Activated CD4-positive, alpha-beta T cell treated with anti-CD3 and anti-CD28 coated beads, Interleukin-2, amount 10 ng/mL, durations not matched to agents 7 days and 5 days (primary cell): ENCODE measurements at regions of chr3 and their contacts with region 1.

Region 1: GRCh38 chr3:16884084-16884747 is 539 bp upstream of the PLCL2 start:
- DNase-seq: peak; percentile 61
- H3K4me3 Mint-ChIP-seq: peak overlapping the region; percentile 92
- H3K27ac Mint-ChIP-seq: peak overlapping the region; percentile 98
- H3K4me1 Mint-ChIP-seq: peaks cover 35% of the 10 kb centered on the region
- H3K27me3 Mint-ChIP-seq: peaks cover 10% of the 10 kb centered on the region

Region 2: GRCh38 chr3:16842272-16843270 is 41.6 kb before region 1 on chr3:
- CTCF ChIA-PET with region 1: interaction called, 10 read pairs
- POLR2A ChIA-PET with region 1: no interaction called
- DNase-seq: peak; percentile 87
- H3K4me3 Mint-ChIP-seq: peak overlapping the region; percentile 71
- H3K27ac Mint-ChIP-seq: peak overlapping the region; percentile 98
- H3K4me1 Mint-ChIP-seq: peaks cover 83% of the 10 kb centered on the region
- H3K27me3 Mint-ChIP-seq: no peaks in the 10 kb centered on the region

Region 3: DNA sequence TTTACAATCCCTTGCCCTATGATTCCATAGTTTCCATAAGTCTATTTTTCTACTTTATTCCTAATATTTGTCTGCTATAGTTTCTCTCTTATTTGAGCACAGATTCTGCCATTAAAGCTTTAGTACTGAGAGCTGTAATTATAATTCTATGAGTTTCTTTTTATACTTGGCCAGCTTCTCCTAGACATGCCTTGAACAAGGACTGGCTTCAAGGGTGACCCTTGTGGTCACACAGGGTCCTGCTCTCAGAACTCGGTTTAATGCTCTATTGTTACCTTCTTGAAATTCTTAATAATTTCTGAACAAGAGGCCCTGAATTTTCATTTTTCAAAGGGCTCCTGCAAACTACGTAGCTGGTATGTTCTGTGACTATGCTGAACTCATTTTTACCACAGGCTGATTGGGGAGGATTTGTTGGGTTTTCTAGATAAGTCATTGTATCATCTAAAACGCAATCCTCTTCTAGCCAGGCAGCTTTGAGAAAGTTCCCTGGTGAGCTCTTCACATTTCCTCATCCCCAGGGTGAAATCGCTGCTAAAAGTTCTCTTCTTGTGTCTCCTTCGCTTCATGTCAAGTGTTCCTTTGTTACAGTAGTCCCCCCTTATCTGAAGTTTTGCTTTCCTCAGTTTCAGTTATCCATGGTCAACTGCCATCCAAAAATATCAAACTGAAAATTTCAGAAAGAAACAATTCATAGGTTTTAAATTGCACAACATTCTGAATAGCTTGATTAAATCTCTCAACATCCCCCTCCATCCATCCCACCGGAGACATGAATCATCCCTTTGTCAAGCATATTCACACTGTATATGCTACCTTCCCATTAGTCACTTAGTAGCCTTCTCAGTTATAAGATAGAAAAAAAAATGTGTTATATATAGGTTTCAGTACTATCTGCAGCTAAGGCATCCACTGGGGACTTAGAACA is 12.0 kb before region 1 on chr3:
- CTCF ChIA-PET with region 1: interaction called, 19 read pairs
- POLR2A ChIA-PET with region 1: no interaction called
- DNase-seq: no peak
- H3K4me3 Mint-ChIP-seq: no peak overlapping the region
- H3K27ac Mint-ChIP-seq: no peak overlapping the region
- H3K4me1 Mint-ChIP-seq: peaks cover under 1% of the 10 kb centered on the region
- H3K27me3 Mint-ChIP-seq: peaks cover 18% of the 10 kb centered on the region

Region 4: DNA sequence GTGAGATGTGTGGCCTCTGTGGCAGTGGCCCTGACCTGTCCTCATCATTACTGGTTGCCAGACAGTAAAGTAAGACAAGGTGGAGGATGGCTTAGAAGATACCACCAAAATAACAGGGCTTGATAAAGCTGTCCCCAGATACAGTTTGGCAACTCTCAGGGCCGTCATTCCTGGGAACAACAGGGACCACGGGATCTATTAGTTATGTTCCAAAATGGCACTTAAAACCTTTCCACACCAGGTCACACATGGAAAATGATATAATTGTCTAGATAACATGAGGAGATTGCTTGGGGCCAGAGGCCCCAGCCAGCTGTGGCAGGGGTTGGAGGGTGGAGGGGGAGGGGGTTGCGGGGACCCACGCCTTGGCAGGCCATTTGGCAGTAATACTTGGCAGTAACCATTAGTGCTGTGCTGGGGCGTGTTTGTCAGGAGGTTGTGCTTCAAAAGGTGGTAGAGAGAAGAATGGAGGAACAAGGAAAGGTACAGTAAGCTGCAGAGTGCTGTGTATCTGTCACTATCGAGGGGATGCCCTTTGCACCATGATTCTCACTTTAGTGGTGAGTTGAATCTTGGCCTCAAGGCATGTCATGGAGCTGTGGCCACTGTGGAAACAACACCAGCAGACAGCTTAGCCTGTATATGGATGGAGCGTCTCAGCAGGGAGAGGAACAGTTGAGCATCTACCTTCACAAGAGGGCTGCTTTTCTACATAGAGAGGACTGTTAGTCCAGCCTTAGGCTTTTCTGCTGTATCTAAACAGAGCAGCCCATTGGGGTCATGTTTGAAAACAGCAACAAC is 14.6 kb after region 1 on chr3:
- CTCF ChIA-PET with region 1: interaction called, 16 read pairs
- POLR2A ChIA-PET with region 1: no interaction called
- DNase-seq: no peak
- H3K4me3 Mint-ChIP-seq: no peak overlapping the region
- H3K27ac Mint-ChIP-seq: no peak overlapping the region
- H3K4me1 Mint-ChIP-seq: peaks cover 86% of the 10 kb centered on the region
- H3K27me3 Mint-ChIP-seq: no peaks in the 10 kb centered on the region

Region 5: DNA sequence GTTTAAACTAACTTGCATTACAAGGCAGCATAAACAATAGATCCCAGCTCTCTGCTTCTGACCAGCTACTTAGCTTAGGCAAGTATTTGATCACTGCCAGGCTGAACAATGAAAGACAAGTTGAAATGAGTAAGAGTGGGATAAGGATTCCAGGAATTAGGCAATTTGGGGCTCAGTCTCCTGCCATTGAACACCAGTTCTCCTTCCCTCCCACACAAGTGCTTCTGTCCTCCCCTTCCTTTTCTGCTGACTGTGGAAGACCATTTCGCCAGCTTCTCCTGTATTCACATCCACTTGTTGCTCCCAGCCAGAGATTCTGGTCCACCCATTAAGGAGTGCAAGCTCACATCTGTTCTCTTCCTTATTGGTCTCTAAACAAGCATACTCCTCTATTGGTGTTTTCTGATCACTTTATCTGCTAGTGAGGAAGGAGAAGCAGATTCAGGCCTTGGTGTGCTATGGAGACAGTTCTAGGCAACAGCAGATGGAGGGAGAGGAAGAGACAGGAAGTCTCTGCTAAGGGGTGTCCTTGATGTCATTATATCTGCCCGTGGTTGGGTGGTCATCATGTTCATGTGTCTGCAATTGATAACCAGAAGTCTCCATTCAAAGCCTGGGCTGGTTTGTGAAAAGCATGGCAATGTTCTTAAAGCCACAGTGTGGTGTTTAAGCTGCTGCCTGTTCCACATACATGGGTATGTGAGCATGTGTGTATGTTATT is 122.1 kb after region 1 on chr3:
- CTCF ChIA-PET with region 1: no interaction called
- POLR2A ChIA-PET with region 1: no interaction called
- DNase-seq: no peak
- H3K4me3 Mint-ChIP-seq: no peak overlapping the region
- H3K27ac Mint-ChIP-seq: no peak overlapping the region
- H3K4me1 Mint-ChIP-seq: peaks cover 18% of the 10 kb centered on the region
- H3K27me3 Mint-ChIP-seq: no peaks in the 10 kb centered on the region